KBM-7 (cell line): ENCODE measurements at regions of chr11 and their contacts with region 1.

Region 1: GRCh38 chr11:79708300-79708932 is 267.6 kb upstream of the TENM4 start:
- DNase-seq: peak; percentile 64

Region 2: DNA sequence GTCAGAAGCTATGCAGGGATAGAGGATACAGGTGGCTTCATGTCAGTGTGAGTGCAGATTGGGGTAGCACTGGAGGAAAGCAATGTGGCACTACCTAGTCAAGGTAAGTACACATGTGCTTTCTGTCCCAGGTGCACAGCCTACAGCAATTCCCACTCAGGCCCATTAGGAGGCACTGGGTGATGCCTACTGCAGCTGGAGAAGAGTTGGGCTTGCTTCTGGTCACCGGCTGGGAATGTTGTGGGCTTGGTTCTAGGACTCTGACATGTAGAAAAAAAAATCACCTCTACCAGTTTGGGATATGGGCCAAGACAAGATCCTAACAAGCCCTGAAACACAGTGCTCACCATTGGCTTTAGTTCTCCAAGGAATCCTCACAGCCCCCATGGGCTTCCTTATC is 337.3 kb before region 1 on chr11:
- in situ Hi-C with region 1: no loop called
- DNase-seq: no peak

Region 3: DNA sequence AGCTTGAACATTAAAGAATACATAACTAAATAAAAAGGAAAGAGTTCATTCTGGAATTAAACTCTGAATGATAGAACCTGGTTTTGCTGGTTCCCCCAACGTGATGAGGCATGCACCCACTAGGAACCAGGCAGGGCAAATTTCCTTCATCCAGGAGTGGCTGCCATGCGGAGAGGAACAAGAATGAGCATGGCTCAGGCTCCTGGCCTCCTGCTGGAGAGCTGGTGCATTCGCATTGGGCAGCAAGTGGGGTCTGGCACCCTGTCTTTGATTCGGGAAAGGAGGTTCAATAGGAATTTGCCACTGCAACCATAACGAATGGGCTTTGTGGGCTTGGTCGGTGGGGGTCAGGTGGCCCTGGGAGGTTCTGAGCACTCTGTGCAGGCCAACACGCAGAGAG is 97.7 kb before region 1 on chr11:
- in situ Hi-C with region 1: loop called (anchors 25 kb)
- DNase-seq: no peak

Region 4: DNA sequence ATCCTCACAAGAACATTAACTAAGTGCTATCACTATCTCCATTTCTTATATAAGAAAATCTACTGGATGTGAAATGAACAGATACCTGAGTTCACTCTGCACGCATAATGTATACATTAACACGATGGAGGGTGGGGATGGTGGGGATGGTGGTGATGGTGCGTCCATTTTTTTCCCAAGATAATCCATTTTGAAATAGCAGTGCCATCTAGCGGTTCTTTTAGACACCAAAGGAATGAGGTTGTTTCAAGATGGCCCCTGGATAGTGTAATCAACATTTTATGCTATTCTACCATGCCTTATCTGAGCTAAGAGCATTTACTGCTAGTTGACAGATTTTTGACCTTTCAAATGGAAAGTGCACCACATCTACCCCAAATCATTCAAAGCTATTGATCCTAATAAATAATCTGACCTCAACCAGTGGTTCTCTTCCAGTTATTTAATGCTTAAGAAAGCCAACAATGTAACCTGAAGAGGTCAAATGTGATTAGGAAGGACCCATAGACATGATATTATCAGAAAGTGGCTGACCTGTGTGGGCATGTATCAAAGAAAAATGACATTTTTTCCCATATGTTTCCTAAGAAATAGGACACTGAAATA is 447.1 kb after region 1 on chr11:
- in situ Hi-C with region 1: loop called (anchors 25 kb)
- DNase-seq: peak; percentile 52